ENCODE measurements at regions of chr6 and their contacts with region 1.

Region 1: GRCh38 chr6:105424175-105424783 is 21.4 kb upstream of the PREP start:
- DNase-seq: peak in 1 of 5 donors; percentile 17
- ATAC-seq: peak in 3 of 4 donors; percentile 56 to 69 (median 56)
- H3K4me3 ChIP-seq: no peak overlapping the region
- H3K27ac ChIP-seq: no peak overlapping the region
- H3K4me1 ChIP-seq: peaks cover 0 to 9% (median 0%) of the 10 kb centered on the region in 12 donors
- H3K27me3 ChIP-seq: no peaks in the 10 kb centered on the region
- CTCF ChIP-seq: peak; percentile 50 to 75 (median 60)
- POLR2A ChIP-seq: no peak

Region 2: DNA sequence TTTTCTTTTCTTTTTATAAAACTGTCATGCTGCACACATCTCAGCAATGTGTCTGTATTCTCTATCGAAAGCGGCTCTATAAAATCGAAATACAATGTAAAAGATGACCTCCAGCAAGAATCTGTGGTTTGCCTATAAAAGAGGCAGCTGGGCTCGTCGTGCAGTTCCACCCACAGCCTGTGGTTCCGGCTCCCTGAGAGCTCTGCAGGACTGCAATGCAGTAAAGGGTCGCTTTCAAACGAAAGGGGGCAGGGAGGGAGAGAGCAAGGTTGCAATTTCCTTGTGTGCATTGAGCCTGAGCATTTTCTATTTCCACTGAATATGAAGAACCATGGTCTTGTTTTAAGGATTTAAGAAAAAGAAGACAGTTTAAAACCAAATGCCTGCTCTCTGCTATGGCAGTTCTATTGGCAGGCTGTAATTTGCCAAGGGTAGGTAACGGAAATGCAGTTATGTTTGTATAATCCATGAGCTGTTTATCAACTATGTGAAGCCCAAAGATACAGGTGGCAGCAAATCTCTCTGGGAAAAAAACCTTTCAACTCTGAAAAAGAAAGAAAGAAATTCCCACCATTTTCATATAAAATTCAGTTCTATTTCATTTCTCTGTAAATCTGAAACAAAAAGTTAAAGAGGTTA is 801.1 kb before region 1 on chr6:
- intact Hi-C with region 1: no loop called
- DNase-seq: no peak
- ATAC-seq: no peak
- H3K4me3 ChIP-seq: no peak overlapping the region
- H3K27ac ChIP-seq: no peak overlapping the region
- H3K4me1 ChIP-seq: no peaks in the 10 kb centered on the region
- H3K27me3 ChIP-seq: no peaks in the 10 kb centered on the region
- CTCF ChIP-seq: no peak
- POLR2A ChIP-seq: no peak

Region 3: GRCh38 chr6:105087571-105088211 is 336.6 kb before region 1 on chr6:
- intact Hi-C with region 1: loop called (anchors 1 to 5 kb)
- DNase-seq: no peak
- ATAC-seq: peak in 2 of 4 donors; percentile 57 to 59
- H3K4me3 ChIP-seq: no peak overlapping the region
- H3K27ac ChIP-seq: no peak overlapping the region
- H3K4me1 ChIP-seq: no peaks in the 10 kb centered on the region
- H3K27me3 ChIP-seq: no peaks in the 10 kb centered on the region
- CTCF ChIP-seq: peak; percentile 68 to 91 (median 81)
- POLR2A ChIP-seq: no peak

Region 4: GRCh38 chr6:105474234-105474633 is 50.0 kb after region 1 on chr6:
- intact Hi-C with region 1: no loop called
- DNase-seq: no peak
- ATAC-seq: no peak
- H3K4me3 ChIP-seq: no peak overlapping the region
- H3K27ac ChIP-seq: no peak overlapping the region
- H3K4me1 ChIP-seq: no peaks in the 10 kb centered on the region
- H3K27me3 ChIP-seq: peaks cover 0 to 4% (median 0%) of the 10 kb centered on the region in 9 donors
- CTCF ChIP-seq: no peak
- POLR2A ChIP-seq: no peak

Region 5: DNA sequence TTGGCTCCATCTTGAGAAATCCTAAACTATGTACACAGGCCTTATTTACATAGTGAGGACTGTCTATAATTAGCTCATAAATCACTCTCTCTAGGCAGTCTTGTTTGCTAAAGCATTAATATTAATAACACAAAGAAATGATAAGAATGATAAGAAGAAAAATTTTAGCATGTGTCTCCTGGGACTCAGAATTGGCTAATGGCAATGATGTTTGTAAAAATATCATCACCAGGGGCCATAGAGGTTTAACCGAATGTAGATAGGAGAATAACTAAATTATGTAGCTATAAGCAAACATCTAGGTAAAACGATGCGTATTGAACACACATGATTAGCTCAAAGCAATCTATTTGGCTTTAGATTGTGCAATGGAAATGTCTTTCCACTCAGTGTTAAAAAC is 923.1 kb after region 1 on chr6:
- intact Hi-C with region 1: loop called in 1 of 10 experiments (anchors 5 kb)
- DNase-seq: no peak
- ATAC-seq: no peak
- H3K4me3 ChIP-seq: no peak overlapping the region
- H3K27ac ChIP-seq: no peak overlapping the region
- H3K4me1 ChIP-seq: no peaks in the 10 kb centered on the region
- H3K27me3 ChIP-seq: peaks cover 0 to 4% (median 0%) of the 10 kb centered on the region in 9 donors
- CTCF ChIP-seq: no peak
- POLR2A ChIP-seq: no peak